Left colon (tissue), 2 donors: ENCODE measurements at regions of chr1 and their contacts with region 1.

Region 1: GRCh38 chr1:147599362-147600118 is 58.2 kb downstream of the BCL9 start:
- DNase-seq: peak; percentile 97 to 99
- ATAC-seq: peak; percentile 89

Region 2: GRCh38 chr1:147167361-147167760 is 432.2 kb before region 1 on chr1:
- intact Hi-C with region 1: loop called in 1 of 2 experiments (anchors 10 kb)
- DNase-seq: no peak
- ATAC-seq: peak; percentile 54

Region 3: DNA sequence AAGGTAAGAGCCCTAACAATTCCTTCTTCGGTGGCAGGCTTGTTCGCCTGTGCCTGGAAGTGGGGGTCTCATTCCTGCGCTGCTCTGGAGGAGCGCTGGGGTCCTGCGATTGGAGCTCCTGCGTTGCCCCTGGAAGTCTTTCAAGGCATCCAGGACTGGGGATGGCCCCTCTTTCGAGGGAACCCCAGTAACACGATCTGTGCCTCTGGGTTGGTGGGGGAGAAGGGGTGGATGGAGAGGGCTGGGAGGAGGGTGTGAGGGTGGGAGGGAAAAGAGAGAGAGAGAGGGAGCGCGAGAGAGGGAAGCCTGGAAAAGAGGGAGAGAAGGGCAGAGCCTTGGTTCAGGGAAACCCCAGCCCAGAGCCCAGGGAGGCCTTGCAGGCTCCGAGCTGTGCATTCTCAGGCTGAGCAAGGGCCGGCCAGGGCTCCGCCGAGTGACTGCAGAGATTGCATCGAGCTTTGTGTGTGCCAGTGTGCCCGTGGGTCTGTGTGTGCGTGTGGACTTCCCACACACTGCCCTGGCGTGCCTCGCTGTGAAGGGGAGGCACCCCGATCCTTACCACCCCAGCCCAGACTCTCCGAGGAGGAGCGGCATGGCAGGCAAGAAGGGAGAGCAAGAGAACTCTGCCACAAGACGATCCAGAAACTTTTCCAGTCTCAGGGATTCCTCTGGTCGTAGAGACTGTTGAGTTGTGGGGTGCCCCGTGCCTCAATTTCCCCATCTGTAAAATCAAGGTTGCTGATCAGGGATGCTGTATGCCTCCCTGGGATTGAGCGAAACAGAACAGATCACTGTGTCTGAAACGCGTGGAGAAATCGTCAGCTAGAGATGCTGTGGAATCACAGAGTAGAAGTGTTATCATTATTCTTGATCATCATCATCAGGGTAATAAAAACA is 57.6 kb before region 1 on chr1:
- intact Hi-C with region 1: loop called in 1 of 2 experiments (anchors 5 kb)
- DNase-seq: peak; percentile 49 to 59
- ATAC-seq: peak; percentile 62